Activated CD4-positive, alpha-beta T cell treated with anti-CD3 and anti-CD28 coated beads, Interleukin-2, amount 10 ng/mL, durations not matched to agents 24 days and 14 days (primary cell): ENCODE measurements at regions of chr19 and their contacts with region 1.

Region 1: GRCh38 chr19:58519355-58520256 is at the start of gene ZBTB45:
- DNase-seq: peak; percentile 97
- H3K4me3 Mint-ChIP-seq: peak within 1 kb of the TSS; percentile 93
- H3K27ac Mint-ChIP-seq: peak within 1 kb of the TSS; percentile 97
- H3K4me1 Mint-ChIP-seq: peaks cover 37% of the 10 kb centered on the region
- H3K27me3 Mint-ChIP-seq: no peaks in the 10 kb centered on the region
- total RNA-seq, gene ZBTB45: 16.8 and 17.5 TPM in 2 replicates

Region 2: DNA sequence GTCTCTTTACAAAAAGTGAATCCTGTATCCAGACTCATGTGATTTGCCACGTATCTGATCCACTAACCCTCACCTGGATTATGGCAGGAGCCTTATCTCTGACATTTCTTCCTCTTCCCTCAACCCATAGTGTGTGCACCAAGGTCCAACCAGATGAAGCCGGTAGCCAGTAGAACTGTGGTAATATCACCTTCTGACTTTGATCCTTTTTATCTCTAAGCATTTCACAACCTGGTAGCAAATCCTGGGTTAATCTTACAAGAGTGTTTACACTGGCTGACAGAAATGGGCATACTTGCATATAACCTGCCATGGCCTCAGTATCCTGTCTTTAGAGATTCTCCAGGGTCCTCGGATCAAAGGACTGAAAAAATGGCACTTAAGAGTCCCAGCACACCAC is 605.1 kb before region 1 on chr19:
- intact Hi-C with region 1: loop called (anchors 5 kb)
- DNase-seq: no peak
- H3K4me3 Mint-ChIP-seq: no peak overlapping the region
- H3K27ac Mint-ChIP-seq: no peak overlapping the region
- H3K4me1 Mint-ChIP-seq: peaks cover 15% of the 10 kb centered on the region
- H3K27me3 Mint-ChIP-seq: no peaks in the 10 kb centered on the region

Region 3: DNA sequence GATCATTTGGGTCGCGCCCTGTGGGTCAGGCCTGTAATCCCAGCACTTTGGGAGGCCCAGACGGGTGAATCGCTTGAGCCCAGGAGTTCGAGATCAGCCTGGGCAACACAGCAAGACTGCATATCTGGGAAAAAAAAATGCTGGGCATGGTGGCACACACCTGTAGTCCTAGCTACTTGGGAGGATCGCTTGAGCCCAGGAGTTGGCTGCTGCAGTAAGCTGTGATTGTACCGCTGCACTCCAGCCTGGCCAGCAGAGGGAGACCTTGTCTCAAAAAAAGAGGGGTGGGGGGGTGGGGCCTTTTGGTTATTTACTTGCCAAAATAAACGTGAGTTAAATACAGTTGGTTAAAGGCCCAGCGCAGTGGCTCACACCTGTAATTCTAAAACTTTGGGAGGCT is 300.7 kb before region 1 on chr19:
- intact Hi-C with region 1: loop called (anchors 2 kb)
- DNase-seq: peak; percentile 75
- H3K4me3 Mint-ChIP-seq: no peak overlapping the region
- H3K27ac Mint-ChIP-seq: no peak overlapping the region
- H3K4me1 Mint-ChIP-seq: peaks cover 3% of the 10 kb centered on the region
- H3K27me3 Mint-ChIP-seq: no peaks in the 10 kb centered on the region

Region 4: GRCh38 chr19:58400916-58401839 is 118.4 kb before region 1 on chr19:
- intact Hi-C with region 1: loop called (anchors 2 kb)
- DNase-seq: peak; percentile 100
- H3K4me3 Mint-ChIP-seq: peak overlapping the region; percentile 91
- H3K27ac Mint-ChIP-seq: peak overlapping the region; percentile 90
- H3K4me1 Mint-ChIP-seq: peaks cover 10% of the 10 kb centered on the region
- H3K27me3 Mint-ChIP-seq: peaks cover 7% of the 10 kb centered on the region

Region 5: DNA sequence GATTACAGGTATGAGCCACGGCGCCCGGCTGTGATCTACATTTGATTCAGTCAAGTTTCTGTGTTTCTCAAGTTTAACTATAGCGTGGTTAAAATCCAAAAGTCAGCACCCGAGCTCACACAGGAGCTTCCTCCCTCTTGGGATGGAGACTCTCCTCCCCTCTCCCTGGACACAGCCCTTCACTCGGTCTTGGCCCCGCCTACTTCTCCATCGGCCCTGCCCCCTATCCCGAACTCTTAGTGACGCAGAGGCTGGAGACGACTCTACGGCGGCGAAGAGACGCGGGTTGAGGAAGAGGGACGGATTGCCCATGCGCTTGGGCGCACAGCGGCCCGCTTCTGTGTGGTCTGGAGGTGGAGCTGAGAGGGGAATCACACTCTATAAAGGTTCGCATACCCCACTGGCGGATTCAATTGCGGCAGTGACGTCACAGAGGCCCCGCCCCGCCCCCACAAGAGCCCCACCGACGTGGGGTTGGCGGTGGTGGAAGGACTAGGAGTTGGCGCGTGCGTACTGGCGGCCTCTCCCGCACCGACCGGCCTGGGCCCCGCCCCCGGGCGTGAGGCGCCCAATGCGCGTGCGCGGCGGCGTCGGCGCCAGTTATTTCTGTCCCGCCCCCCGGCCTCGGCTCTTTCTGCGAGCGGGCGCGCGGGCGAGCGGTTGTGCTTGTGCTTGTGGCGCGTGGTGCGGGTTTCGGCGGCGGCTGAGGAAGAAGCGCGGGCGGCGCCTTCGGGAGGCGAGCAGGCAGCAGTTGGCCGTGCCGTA is 24.4 kb after region 1 on chr19 and contains the start of gene TRIM28:
- intact Hi-C with region 1: loop called (anchors 1 kb)
- DNase-seq: peak; percentile 100
- H3K4me3 Mint-ChIP-seq: peak within 1 kb of the TSS; percentile 94
- H3K27ac Mint-ChIP-seq: peak within 1 kb of the TSS; percentile 99
- H3K4me1 Mint-ChIP-seq: peaks cover 29% of the 10 kb centered on the region
- H3K27me3 Mint-ChIP-seq: peaks cover 23% of the 10 kb centered on the region
- total RNA-seq, gene TRIM28: 689 and 698 TPM in 2 replicates

Region 6: GRCh38 chr19:58581227-58582151 is 61.9 kb after region 1 on chr19:
- intact Hi-C with region 1: loop called (anchors 1 kb)
- DNase-seq: peak; percentile 97
- H3K4me3 Mint-ChIP-seq: no peak overlapping the region
- H3K27ac Mint-ChIP-seq: peak overlapping the region; percentile 77
- H3K4me1 Mint-ChIP-seq: peaks cover 29% of the 10 kb centered on the region
- H3K27me3 Mint-ChIP-seq: no peaks in the 10 kb centered on the region